GM18951 (cell line): ENCODE measurements at regions of chr2 and their contacts with region 1.

Region 1: DNA sequence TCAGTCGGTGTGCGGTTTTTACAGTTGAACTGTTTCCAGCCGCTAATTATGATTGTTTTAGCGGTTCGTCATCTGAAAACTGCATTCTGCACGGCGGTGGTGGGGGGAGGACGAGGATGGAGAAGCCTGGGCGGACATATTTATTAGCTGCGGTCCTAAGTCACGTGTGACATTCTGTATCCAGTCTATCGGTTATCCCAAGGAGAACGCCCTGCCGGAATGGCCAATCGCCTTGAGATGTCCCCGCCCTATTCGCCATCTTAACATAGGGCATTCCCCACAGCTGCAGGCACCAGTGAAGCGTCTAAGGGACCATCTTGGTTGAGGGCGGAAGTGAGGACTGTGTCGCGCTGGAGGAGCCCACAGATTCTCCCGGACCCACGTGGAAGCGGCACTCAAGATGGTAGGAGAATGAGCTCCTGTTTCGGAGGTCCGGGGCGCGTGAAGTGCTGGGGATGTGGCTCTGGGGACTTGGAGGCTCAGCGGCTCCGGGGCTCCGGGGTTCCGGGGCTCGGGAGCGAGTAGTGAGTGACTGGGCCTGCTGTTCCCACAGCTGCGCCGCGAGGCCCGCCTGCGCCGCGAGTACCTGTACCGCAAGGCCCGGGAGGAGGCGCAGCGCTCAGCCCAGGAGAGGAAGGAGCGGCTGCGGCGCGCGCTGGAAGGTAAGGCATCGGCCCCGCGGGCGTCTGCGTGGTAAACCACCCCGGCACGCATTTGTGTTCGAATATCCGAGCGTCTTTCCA is at the start of gene IMP4:
- POLR2A ChIP-seq: peak; percentile 85

Region 2: DNA sequence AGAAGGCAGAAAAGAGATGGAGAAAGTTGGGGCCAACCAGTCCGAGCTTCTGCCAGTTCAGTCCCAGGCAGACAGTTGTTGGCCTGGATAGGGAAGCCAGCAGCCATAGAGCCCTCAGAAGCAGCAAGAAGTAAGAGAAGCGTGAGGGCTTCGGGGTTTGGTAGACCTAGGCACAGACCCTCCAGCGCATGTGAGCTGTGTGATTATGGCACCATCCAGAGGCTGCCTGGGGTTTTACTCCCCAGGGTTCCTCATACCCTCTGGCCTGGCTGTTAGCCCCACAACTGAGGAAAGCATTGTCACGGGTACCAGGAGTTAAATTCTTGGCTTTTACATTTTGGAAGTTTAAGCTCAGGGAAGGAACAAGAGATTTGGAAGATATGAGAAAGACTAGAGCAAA is 457.0 kb before region 1 on chr2:
- in situ Hi-C with region 1: no loop called
- POLR2A ChIP-seq: no peak

Region 3: DNA sequence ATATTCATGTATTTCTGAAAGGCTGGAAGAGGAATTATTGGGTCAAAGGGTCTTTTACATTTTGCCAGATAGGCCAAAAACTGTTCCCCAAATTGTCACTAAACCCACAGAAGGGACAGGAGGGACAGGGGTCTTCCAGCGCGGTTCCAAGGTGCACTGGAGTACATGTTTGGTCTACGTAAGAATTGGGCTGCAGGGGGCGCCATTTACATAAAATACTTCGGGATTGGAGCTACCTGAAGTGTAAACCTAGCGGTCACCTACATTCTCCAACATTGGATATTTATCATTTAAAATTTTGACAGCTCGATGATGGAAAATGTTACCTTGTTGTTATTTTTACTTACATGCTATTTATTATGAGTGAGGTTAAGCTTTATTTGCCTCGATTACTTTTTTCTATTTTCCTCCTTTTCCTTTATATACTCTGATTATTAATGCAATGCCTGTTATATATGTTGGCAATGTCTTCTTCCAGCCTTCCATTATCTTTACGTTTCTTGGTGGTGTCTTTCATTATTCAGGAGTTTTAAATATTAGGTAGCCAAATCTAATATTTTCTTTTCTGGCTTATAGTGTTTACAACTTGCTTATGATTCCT is 406.3 kb before region 1 on chr2:
- in situ Hi-C with region 1: loop called (anchors 25 kb)
- POLR2A ChIP-seq: no peak

Region 4: DNA sequence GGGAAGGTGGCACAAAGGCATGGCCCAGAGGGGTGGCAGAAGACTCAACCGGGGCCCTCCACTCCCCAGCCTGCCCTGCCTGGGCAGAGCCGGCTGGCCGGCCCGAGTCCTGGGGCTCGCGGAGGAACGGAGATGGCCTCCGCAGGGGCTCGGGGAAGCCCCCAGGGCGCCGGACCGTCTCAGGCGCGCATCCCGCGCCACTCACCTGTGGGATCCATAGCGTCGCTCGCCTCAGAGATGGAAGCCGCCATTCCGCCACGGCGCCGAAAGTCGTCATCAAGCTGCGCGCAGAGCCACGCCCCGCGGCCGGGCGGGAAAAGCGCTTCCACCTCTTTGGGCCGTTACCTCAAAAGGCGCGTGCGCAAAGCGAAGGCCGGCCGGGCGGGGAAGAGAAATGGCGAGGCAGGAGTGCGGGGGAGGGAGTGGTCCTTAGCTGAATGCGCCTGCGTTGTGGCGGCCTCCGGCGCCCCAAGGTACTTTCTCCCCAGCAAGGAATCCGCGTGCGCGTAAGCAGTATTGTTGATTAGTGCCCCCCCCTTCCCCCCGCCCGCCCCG is 161.3 kb before region 1 on chr2 and contains the start of gene SMPD4:
- in situ Hi-C with region 1: loop called (anchors 25 kb)
- POLR2A ChIP-seq: peak; percentile 66

Region 5: GRCh38 chr2:131659168-131659572 is 1316.5 kb after region 1 on chr2:
- in situ Hi-C with region 1: no loop called
- POLR2A ChIP-seq: no peak